Activated B cell treated with CpG ODN at 0.5 μM for 24 hours (primary cell): ENCODE measurements at regions of chr4 and their contacts with region 1.

Region 1: DNA sequence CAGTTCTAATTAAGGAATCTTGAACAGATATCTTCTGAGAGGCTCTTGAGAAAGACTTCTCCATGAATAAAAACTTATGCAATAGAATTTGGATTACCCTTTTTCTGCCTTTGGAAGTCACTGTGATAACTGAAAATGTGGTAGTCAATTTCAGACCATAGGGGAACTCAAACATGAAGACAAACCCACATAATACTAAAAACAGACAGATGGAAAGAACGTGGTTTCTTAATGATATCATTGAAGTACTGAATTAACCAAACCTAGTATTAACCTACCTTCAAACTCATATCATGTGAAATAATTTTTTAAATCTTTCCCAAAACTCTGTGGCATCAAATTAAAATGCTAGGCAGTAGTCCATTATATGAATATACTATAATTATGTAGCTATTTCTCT is 153.5 kb downstream of the CAMK2D start:
- DNase-seq: no peak
- ATAC-seq: no peak
- H3K4me3 Mint-ChIP-seq: no peak overlapping the region
- H3K27ac Mint-ChIP-seq: peak overlapping the region; percentile 71
- H3K4me1 Mint-ChIP-seq: peaks cover 70% of the 10 kb centered on the region
- H3K27me3 Mint-ChIP-seq: no peaks in the 10 kb centered on the region
- CTCF ChIP-seq: no peak

Region 2: GRCh38 chr4:113618205-113618604 is 10.2 kb after region 1 on chr4:
- CTCF ChIA-PET with region 1: no interaction called
- POLR2A ChIA-PET with region 1: no interaction called
- intact Hi-C with region 1: loop called (anchors 1 kb)
- DNase-seq: no peak
- ATAC-seq: peak; percentile 83
- H3K4me3 Mint-ChIP-seq: no peak overlapping the region
- H3K27ac Mint-ChIP-seq: no peak overlapping the region
- H3K4me1 Mint-ChIP-seq: peaks cover 48% of the 10 kb centered on the region
- H3K27me3 Mint-ChIP-seq: no peaks in the 10 kb centered on the region
- CTCF ChIP-seq: no peak

Region 3: DNA sequence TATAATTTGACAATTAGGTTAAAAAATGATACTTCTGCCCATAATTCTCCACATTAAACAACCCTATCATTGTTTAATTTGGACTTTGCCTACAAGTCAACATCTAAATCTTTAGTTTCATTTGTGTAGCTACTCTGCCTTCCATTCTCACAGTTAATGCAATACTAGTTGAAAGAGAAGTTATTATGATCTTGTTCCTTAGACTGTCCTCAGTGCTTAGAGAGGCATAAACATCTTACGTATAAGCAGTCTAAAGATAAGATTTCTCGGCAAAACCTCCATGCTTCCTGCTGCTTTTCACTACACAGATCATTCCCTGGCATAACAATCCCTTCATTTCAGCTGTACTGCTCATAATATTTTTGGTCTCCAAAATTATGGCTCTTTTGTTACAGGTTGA is 258.6 kb after region 1 on chr4:
- CTCF ChIA-PET with region 1: no interaction called
- POLR2A ChIA-PET with region 1: no interaction called
- intact Hi-C with region 1: no loop called
- DNase-seq: no peak
- ATAC-seq: no peak
- H3K4me3 Mint-ChIP-seq: no peak overlapping the region
- H3K27ac Mint-ChIP-seq: no peak overlapping the region
- H3K4me1 Mint-ChIP-seq: peaks cover 17% of the 10 kb centered on the region
- H3K27me3 Mint-ChIP-seq: peaks cover 2% of the 10 kb centered on the region
- CTCF ChIP-seq: no peak

Region 4: DNA sequence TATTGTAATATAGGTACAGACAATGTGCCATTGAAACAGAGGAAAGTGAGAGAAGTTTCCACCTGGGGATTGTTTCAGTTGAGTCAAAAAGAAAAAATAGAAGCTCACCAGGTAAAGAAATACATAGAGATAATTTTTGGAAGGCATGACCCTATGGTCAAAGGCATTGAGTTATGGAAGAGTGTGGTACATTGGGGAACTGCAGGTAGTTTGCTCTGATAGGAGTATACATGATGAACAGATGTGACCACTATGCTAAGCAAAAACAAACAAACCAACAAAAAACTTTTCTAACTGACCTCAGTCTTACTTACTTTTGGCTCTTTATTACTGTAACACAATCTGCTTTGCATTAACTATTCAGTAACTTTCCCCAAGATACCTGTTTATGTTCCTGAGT is 1076.5 kb after region 1 on chr4:
- CTCF ChIA-PET with region 1: no interaction called
- POLR2A ChIA-PET with region 1: no interaction called
- intact Hi-C with region 1: no loop called
- DNase-seq: no peak
- ATAC-seq: no peak
- H3K4me3 Mint-ChIP-seq: no peak overlapping the region
- H3K27ac Mint-ChIP-seq: no peak overlapping the region
- H3K4me1 Mint-ChIP-seq: peaks cover 17% of the 10 kb centered on the region
- H3K27me3 Mint-ChIP-seq: no peaks in the 10 kb centered on the region
- CTCF ChIP-seq: no peak